ENCODE measurements at regions of chr4 and their contacts with region 1.

Region 1: DNA sequence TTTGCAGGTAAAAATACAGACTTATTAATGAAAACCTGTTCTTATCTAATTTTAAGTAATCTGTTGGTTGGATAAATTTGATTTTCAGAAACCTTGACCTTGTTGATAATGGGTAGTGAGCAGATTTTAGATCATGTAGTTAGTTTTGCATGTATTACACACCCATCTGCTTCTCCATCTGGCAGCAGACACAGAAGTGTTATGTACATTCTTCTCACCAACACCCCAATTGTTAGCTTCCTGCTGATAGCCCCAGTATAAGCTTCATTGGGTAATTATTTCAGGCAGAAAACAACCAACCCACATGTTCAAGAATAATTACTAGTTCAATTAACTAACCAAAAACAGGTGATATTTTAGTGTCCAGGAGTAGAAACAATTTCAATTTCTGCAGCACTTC is 1740.5 kb upstream of the AGA start:
- DNase-seq: no peak

Region 2: GRCh38 chr4:178535939-178536579 is 646.7 kb before region 1 on chr4:
- intact Hi-C with region 1: loop called in 1 of 2 experiments (anchors 5 kb)
- DNase-seq: no peak

Region 3: DNA sequence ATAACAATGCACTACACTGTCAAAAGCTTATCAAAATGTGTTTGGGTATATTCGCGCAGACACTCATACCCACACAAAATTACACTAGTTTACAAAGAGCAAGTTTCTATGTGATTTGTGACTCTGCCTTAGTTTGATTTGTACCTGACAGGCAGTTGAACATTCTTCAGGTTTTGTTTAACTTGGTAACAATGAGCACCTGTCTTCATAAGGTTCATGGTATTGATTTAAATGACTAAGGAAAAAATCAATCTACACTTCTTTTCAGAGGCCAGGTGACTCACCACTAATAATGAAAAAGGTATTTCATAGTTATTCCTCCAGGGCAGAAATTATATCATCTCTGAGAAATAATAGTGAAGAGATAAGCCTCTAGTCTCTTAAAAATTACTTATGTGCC is 625.9 kb before region 1 on chr4:
- intact Hi-C with region 1: no loop called
- DNase-seq: no peak

Region 4: GRCh38 chr4:178693816-178694215 is 488.9 kb before region 1 on chr4:
- intact Hi-C with region 1: no loop called
- DNase-seq: no peak

Measured in posterior vena cava (tissue), 2 donors.